ENCODE measurements at regions of chr22 and their contacts with region 1.

Region 1: GRCh38 chr22:41998361-41999275 is at the start of gene WBP2NL:
- DNase-seq: peak; percentile 95
- total RNA-seq, gene WBP2NL: 1.1 to 1.2 TPM

Region 2: GRCh38 chr22:42016101-42016500 is 17.5 kb after region 1 on chr22:
- intact Hi-C with region 1: loop called in 1 of 2 experiments (anchors 1 kb)
- DNase-seq: no peak

Measured in posterior vena cava (tissue), 2 donors.